H1 (cell line): ENCODE measurements at regions of chr6 and their contacts with region 1.

Region 1: DNA sequence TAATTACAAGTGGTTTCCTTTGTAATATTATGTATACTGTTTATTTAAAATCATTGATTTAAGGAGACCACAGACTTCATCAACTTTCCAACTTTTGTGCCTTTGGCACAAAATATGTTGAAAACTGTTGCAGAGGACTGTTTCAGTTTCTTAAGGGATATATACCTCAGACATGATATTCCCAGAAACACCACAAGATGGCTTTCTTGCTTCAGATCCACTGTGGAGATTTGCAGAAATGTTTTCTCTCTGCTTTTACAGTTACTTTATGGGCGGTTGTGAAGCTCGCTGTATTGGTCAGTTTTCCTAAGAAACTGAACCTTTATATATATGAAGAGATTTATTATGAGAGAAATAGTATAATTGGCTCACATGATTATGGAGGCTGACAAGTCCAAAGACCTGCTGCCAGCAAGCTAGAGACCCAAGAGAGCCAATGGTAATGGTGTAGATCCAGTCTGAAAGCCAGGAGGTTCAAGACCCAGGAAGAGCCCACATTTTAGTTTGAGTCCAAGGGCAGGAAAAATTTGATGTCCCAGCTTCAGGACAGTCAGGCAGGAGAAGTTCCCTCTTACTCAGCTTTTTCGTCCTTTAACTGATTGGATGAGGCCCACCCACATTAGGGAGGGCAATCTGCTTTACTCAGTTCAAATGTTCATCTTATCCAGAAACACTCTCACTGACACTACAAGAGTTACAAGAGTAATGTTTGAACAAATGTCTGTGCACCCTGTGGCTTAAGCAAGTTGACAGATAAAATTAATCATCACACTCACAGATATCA is 12.8 kb downstream of the ME1 start:
- DNase-seq: no peak
- H3K4me3 ChIP-seq: no peak overlapping the region
- H3K27ac ChIP-seq: no peak overlapping the region
- H3K4me1 ChIP-seq: no peaks in the 10 kb centered on the region
- H3K27me3 ChIP-seq: no peaks in the 10 kb centered on the region
- CTCF ChIP-seq: peak in 2 of 3 experiments; percentile 46 to 59; a peak in 3 of 4 replicates
- EP300 ChIP-seq: no peak
- POLR2A ChIP-seq: no peak
- RAD21 ChIP-seq: peak; percentile 71 to 75

Region 2: GRCh38 chr6:83365931-83366330 is 52.1 kb before region 1 on chr6:
- CTCF ChIA-PET with region 1: no interaction called
- POLR2A ChIA-PET with region 1: no interaction called
- DNase-seq: no peak
- H3K4me3 ChIP-seq: no peak overlapping the region
- H3K27ac ChIP-seq: no peak overlapping the region
- H3K4me1 ChIP-seq: no peaks in the 10 kb centered on the region
- H3K27me3 ChIP-seq: no peaks in the 10 kb centered on the region
- CTCF ChIP-seq: no peak
- EP300 ChIP-seq: no peak
- POLR2A ChIP-seq: no peak
- RAD21 ChIP-seq: no peak

Region 3: DNA sequence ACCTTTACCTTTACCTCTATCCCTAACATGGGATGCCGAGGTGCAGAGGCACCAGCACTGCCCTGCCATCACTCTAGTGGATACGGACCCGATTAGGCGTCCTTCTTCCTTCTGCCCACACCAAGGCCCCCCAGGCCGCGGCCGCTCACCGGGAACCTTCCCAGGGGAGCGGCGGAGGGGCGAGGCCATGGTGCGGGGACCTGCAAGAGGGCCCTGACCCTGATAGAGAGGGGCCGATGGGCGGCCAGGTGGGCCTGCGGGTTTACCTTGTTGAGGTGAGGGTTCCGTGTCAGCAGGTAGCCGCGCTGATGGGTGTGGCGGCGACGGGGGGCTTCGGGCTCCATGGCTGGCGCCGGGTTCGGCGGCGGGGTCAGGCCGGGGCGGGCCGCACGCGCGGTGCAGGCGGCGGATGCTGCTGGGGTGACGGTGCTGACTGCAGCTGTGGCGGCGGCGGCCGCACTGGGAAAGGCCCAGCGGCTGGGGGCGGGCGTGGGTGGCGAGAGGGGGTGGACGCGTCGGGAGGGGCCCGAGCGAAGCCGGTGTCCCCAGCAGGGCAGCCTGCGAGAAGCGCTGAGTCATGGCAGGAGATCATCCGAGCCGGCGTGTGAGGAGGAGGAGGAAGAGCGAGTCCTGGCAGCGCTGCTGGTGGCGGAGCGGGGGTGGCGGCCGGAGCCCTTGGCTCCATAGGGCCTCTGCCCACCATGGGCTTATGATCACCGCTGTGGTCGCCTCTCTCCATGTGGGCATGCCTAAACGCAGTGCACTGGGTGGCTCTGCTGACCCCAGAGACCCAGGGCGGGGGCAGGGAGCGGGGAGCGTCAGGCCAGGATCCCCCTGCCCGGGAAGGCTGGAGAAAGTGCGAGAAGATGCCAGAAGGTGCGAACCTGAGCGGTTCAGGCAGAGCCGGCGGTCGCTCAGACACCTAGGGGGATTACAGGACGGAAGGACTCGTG is 12.8 kb after region 1 on chr6 and contains the start of gene ME1:
- CTCF ChIA-PET with region 1: interaction called, 14 read pairs
- POLR2A ChIA-PET with region 1: no interaction called
- DNase-seq: peak; percentile 36 to 72
- H3K4me3 ChIP-seq: peak within 1 kb of the TSS; percentile 50 to 66 (median 56)
- H3K27ac ChIP-seq: no peak within 1 kb of the TSS
- H3K4me1 ChIP-seq: peaks cover 0 to 9% (median 6%) of the 10 kb centered on the region in 4 experiments; a peak in 6 of 7 replicates
- H3K27me3 ChIP-seq: peaks cover 0 to 4% (median 0%) of the 10 kb centered on the region in 4 experiments; a peak in 1 of 7 replicates
- CTCF ChIP-seq: no peak
- EP300 ChIP-seq: no peak
- POLR2A ChIP-seq: peak in 1 of 2 experiments; percentile 64
- RAD21 ChIP-seq: no peak
- total RNA-seq, gene ME1: 3.9 and 4.2 TPM in 2 replicates

Region 4: DNA sequence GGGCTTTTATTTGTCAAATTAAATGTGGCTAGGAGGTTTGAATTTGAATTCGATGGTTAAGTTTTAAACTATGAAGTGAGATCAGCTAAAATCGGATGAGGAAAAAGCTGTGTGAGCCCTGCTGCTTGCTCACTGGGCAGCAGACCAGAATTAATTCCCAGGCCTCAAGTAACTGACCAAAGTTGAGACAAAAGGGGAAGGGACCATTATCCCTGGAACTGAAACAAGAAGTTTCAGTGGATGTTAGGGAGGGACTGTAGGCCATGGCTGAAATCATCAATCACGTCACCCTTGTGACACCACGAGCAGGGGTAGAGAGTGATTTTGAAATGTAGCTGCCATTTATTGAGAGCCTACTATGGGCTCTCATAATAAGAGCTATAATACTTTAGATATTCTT is 87.3 kb after region 1 on chr6:
- CTCF ChIA-PET with region 1: interaction called, 166 read pairs
- POLR2A ChIA-PET with region 1: no interaction called
- DNase-seq: no peak
- H3K4me3 ChIP-seq: no peak overlapping the region
- H3K27ac ChIP-seq: no peak overlapping the region
- H3K4me1 ChIP-seq: no peaks in the 10 kb centered on the region
- H3K27me3 ChIP-seq: no peaks in the 10 kb centered on the region
- CTCF ChIP-seq: no peak
- EP300 ChIP-seq: no peak
- POLR2A ChIP-seq: no peak
- RAD21 ChIP-seq: no peak

Region 5: DNA sequence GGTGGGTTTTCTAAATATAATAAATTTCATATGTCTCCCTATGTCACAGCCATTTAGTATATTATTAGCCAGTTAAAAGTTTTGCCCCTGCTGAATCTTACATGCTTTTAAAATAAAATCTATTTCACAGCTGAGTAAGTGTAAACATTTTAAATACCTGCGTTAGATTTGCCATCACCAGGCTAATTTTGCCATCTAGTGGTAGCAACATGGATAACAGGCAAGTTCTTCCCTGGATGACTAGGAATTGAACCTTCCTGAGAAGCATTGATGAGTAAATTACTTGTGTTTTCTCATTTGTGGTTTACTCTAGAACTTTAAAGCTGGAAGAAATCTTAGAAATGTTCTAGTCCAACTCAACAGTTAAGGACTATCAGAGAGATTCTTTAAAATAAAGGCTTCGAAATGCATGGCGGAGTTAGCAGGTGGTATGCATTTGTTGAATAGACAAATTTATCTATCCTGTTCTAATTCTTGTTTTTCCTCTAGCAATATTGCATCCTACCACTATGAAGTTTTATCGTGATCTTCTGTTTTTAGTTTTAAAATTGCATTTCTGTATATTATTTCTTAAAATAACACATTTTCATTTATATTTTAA is 96.9 kb after region 1 on chr6:
- CTCF ChIA-PET with region 1: interaction called, 166 read pairs
- POLR2A ChIA-PET with region 1: interaction called, 7 read pairs
- DNase-seq: no peak
- H3K4me3 ChIP-seq: no peak overlapping the region
- H3K27ac ChIP-seq: no peak overlapping the region
- H3K4me1 ChIP-seq: peaks cover 0 to 4% (median 0%) of the 10 kb centered on the region in 4 experiments; a peak in 3 of 7 replicates
- H3K27me3 ChIP-seq: no peaks in the 10 kb centered on the region
- CTCF ChIP-seq: peak in 2 of 3 experiments; percentile 69; a peak in 3 of 4 replicates
- EP300 ChIP-seq: no peak
- POLR2A ChIP-seq: no peak
- RAD21 ChIP-seq: peak; percentile 92

Region 6: GRCh38 chr6:83536034-83536646 is 118.1 kb after region 1 on chr6:
- CTCF ChIA-PET with region 1: interaction called, 11 read pairs
- POLR2A ChIA-PET with region 1: no interaction called
- DNase-seq: peak in 1 of 2 experiments; percentile 84
- H3K4me3 ChIP-seq: no peak overlapping the region
- H3K27ac ChIP-seq: no peak overlapping the region
- H3K4me1 ChIP-seq: no peaks in the 10 kb centered on the region
- H3K27me3 ChIP-seq: no peaks in the 10 kb centered on the region
- CTCF ChIP-seq: peak in 2 of 3 experiments; percentile 62 to 91; a peak in 3 of 4 replicates
- EP300 ChIP-seq: no peak
- POLR2A ChIP-seq: no peak
- RAD21 ChIP-seq: peak; percentile 72 to 76